Sciatic nerve (tissue), 2 donors: ENCODE measurements at regions of chrX and their contacts with region 1.

Region 1: DNA sequence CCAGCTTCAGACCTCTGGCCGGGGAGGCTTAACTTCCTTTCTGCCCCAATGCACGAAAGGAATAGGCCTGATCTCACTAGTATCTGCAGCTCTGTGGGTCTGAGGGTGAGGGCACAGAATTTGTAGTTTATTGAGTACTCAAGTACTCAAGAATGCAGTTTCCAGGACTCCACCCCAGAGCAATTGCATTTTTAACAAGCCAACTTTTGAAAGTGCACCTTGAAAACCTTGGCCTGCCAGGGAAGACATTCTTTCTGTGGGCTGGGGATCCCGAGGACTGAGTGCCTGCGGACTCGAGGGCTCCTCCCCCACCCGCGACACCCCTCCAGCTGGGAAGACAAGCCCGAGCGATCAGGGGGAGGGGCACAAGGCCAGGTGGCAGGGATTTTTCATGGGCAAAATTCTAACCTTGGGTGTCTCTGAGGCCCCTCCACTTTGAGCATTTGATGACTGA is 22.4 kb downstream of the RS1 start:
- DNase-seq: no peak
- ATAC-seq: no peak

Region 2: DNA sequence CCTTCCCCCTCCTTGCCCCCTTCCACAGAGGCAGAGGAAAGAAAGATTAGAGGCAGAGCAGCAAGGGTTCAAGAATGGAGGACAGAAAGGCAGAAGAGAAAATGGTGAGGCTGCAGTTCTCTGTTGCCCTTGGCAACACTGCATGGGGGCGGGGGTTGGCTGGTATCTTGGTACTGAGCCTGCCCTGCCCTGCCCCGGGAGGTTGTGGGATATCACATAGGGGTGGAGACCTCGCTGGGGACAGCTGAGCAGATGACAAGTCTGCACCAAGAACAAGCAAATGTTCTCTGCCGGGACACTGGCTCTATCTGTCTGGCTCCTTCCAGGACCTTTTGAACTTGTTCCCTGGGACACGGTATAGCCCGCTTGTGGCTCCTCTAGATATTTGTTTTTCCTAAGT is 1234.7 kb before region 1 on chrX:
- intact Hi-C with region 1: loop called (anchors 5 kb)
- DNase-seq: peak; percentile 57
- ATAC-seq: peak; percentile 76

Region 3: GRCh38 chrX:18591834-18592233 is 57.7 kb before region 1 on chrX:
- intact Hi-C with region 1: no loop called
- DNase-seq: no peak
- ATAC-seq: no peak

Region 4: DNA sequence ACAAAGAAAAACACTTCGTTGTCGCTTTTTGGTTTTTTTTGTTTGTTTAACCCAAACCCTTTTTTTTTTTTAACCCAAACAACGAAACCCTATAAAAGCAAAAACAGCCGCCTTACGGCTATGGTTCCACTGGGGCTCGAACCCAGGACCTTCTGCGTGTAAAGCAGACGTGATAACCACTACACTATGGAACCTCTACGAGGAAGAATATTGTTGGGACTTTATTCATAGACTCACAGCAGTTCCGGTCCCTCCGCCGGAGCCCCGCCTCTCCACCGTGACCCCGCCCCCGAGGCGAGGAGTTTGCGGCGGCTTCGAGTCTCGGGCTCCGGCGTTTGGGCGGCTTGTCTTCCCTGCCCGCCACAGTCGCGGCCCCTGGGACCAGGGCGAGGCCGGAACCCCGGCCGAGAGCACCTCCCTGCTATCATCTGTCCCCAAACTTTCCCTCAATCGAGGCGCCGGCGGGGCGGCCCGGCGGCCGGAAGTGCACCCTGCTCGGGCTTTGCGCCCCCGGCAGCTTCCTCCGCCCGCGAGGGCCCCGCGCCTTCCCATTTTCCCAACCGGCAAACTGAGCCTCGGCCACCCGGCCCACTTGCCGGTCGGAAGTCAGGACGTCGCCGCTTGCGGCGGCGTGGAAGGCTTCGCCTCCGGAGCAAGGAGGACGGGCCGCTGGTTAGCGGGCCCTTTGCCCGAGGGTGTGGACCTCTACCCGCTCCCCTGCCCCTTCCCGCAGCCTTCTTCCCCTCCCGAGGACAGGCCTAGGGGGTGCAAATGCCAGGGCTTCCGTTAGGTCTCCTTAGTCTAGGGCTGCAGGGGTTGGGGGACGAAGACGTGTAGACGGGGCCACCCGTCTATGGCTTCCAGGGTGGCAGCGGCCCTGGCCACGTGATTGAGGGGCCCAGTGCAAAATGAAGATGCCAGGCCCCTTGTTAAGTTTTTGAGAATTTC is 25.5 kb after region 1 on chrX:
- intact Hi-C with region 1: no loop called
- DNase-seq: peak; percentile 86
- ATAC-seq: peak; percentile 97